ENCODE measurements at regions of chr16 and their contacts with region 1.

Region 1: DNA sequence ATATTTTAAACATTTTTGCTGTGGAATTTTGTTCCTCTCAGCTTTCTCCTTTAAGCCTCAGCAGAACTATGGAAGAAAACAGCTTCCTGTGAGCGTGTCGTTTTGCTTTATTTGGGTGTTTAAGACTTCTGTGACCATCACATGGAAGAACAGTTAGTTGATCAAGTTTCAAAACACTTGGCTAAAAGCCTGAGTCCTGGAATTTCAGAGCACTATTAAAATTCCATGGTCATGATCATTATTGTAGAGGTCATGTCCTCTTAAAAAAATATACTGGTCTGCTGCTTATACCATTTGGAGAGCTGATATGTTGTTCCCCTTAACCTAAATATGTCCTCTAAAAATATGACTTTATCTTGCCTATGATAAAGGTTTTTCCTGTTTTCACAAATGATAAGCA is 12.6 kb upstream of the CDR2 start:
- DNase-seq: peak; percentile 90
- H3K4me3 ChIP-seq: no peak overlapping the region
- H3K27ac ChIP-seq: peak overlapping the region; percentile 40
- H3K4me1 ChIP-seq: peaks cover 17% of the 10 kb centered on the region
- H3K27me3 ChIP-seq: no peaks in the 10 kb centered on the region
- CTCF ChIP-seq: no peak
- POLR2A ChIP-seq: no peak

Region 2: GRCh38 chr16:22373662-22374310 is 13.2 kb before region 1 on chr16:
- CTCF ChIA-PET with region 1: interaction called, 5 read pairs
- POLR2A ChIA-PET with region 1: no interaction called
- dilution Hi-C with region 1: no loop called
- intact Hi-C with region 1: loop called (anchors 2 kb)
- DNase-seq: peak; percentile 56
- H3K4me3 ChIP-seq: peak overlapping the region; percentile 82 to 97 (median 87)
- H3K27ac ChIP-seq: peak overlapping the region; percentile 71
- H3K4me1 ChIP-seq: peaks cover 46% of the 10 kb centered on the region
- H3K27me3 ChIP-seq: no peaks in the 10 kb centered on the region
- CTCF ChIP-seq: no peak
- POLR2A ChIP-seq: no peak

Region 3: DNA sequence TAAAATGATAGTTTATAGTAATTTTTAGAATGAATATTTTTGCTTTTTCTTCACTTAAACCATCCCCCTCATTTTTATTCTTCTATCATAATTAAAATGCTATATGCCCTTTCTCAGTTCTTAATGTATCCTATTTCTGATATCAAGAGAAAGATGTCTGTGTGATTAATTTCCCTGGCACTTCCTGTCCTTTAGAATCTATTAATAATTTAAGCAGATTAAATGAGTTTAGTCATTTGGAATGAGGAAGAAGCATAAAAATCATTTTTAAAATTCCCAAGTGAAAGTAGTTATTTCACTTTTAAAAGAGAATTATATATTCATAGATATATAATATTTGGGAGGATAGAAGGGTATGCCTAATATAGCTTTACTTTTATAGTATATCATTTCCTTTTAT is 15.2 kb after region 1 on chr16:
- CTCF ChIA-PET with region 1: interaction called, 12 read pairs
- POLR2A ChIA-PET with region 1: interaction called, 8 read pairs
- dilution Hi-C with region 1: no loop called
- intact Hi-C with region 1: loop called (anchors 1 kb)
- DNase-seq: peak; percentile 58
- H3K4me3 ChIP-seq: peak overlapping the region in 2 of 3 experiments; percentile 35 to 39
- H3K27ac ChIP-seq: peak overlapping the region; percentile 92
- H3K4me1 ChIP-seq: peaks cover 24% of the 10 kb centered on the region
- H3K27me3 ChIP-seq: no peaks in the 10 kb centered on the region
- CTCF ChIP-seq: no peak
- POLR2A ChIP-seq: no peak

Region 4: GRCh38 chr16:22705799-22706198 is 318.8 kb after region 1 on chr16:
- CTCF ChIA-PET with region 1: no interaction called
- POLR2A ChIA-PET with region 1: no interaction called
- dilution Hi-C with region 1: no loop called
- intact Hi-C with region 1: no loop called
- DNase-seq: no peak
- H3K4me3 ChIP-seq: no peak overlapping the region
- H3K27ac ChIP-seq: no peak overlapping the region
- H3K4me1 ChIP-seq: no peaks in the 10 kb centered on the region
- H3K27me3 ChIP-seq: no peaks in the 10 kb centered on the region
- CTCF ChIP-seq: no peak
- POLR2A ChIP-seq: no peak